Activated T-helper 2 cell treated with anti-CD3 and anti-CD28 coated beads, Interferon-gamma antibody, Interleukin-2, Interleukin-4, amounts not matched to agents 10 μg/mL and 5 μg/mL and 100 μg/mL, durations not matched to agents 14 hours and 24 hours and 36 hours (primary cell): ENCODE measurements at regions of chr9 and their contacts with region 1.

Region 1: GRCh38 chr9:89497978-89498851 is at the start of gene SEMA4D:
- DNase-seq: peak; percentile 55
- H3K4me3 Mint-ChIP-seq: peak within 1 kb of the TSS; percentile 87
- H3K27ac Mint-ChIP-seq: peak within 1 kb of the TSS; percentile 86
- H3K4me1 Mint-ChIP-seq: peaks cover 78% of the 10 kb centered on the region
- H3K27me3 Mint-ChIP-seq: no peaks in the 10 kb centered on the region
- total RNA-seq, gene SEMA4D: 317 and 330 TPM in 2 replicates

Region 2: DNA sequence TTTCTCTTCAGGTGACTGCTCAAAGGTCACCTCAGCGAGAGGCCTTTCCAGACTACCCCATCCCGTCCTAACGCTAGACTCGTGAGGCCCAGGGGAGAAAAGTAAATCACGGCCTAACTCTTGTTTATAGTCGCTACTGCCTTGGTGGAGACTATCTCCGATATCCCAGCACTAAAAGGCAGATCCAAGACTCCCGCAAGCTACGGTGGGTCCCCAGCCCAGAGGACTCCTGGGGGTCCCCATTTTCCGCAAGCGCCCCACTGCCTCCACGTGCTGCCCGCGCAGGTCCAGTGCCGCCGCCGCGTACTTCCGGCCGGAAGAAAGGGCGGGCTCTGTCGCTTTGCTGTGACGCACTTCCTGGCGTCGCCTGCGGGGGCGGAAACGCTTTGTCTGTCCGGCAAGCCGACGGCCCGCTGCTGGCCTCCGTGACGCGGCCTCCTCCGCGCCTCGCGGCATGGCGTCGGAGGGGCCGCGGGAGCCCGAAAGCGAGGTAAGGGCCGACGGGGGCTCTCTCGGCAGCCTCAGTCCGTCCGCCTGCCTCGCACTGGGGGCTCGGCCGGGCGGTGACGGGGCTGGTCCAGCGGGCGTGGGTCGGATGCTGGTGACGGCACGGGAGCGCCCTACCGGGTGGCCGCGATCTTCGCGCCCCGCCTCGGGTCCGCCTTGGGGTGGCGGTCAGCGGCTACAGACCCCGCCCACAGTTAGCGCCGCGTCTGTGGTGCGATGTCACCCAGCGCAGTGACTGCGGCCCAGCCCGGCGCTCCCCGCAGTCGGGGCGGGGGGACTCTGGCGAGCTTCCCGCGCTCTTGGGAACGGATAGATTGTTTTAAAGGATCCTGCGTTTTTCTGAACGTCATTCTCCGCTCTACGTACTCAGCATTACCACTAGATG is 179.8 kb before region 1 on chr9 and contains the start of gene SECISBP2:
- intact Hi-C with region 1: loop called (anchors 2 kb)
- DNase-seq: peak; percentile 94
- H3K4me3 Mint-ChIP-seq: peak within 1 kb of the TSS; percentile 88
- H3K27ac Mint-ChIP-seq: peak within 1 kb of the TSS; percentile 98
- H3K4me1 Mint-ChIP-seq: peaks cover 78% of the 10 kb centered on the region
- H3K27me3 Mint-ChIP-seq: no peaks in the 10 kb centered on the region
- total RNA-seq, gene SECISBP2: 51.3 and 53.5 TPM in 2 replicates

Region 3: DNA sequence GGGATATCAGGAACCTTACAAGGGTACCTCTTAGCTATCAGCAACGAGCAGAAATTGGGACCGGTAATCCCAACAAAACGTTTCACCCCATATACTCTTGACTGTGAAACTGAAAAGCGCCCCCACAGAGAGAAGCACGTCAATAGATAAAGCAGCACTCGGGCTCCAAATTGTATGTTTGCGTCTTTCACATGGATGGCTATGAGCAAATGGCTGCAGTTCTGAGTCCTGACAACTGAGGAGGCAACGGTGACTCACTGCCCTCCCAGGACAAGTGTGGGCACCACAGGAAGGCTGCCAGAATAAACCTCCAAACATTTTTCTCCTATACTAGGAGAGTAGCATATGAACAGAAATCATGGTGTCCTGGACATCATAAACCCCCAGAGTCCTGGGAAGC is 37.0 kb before region 1 on chr9:
- intact Hi-C with region 1: no loop called
- DNase-seq: no peak
- H3K4me3 Mint-ChIP-seq: peak overlapping the region; percentile 40
- H3K27ac Mint-ChIP-seq: peak overlapping the region; percentile 91
- H3K4me1 Mint-ChIP-seq: peaks cover 91% of the 10 kb centered on the region
- H3K27me3 Mint-ChIP-seq: no peaks in the 10 kb centered on the region

Region 4: GRCh38 chr9:89483592-89484522 is 14.4 kb before region 1 on chr9:
- intact Hi-C with region 1: loop called (anchors 1 kb)
- DNase-seq: peak; percentile 57
- H3K4me3 Mint-ChIP-seq: peak overlapping the region; percentile 80
- H3K27ac Mint-ChIP-seq: peak overlapping the region; percentile 93
- H3K4me1 Mint-ChIP-seq: peaks cover 77% of the 10 kb centered on the region
- H3K27me3 Mint-ChIP-seq: no peaks in the 10 kb centered on the region

Region 5: DNA sequence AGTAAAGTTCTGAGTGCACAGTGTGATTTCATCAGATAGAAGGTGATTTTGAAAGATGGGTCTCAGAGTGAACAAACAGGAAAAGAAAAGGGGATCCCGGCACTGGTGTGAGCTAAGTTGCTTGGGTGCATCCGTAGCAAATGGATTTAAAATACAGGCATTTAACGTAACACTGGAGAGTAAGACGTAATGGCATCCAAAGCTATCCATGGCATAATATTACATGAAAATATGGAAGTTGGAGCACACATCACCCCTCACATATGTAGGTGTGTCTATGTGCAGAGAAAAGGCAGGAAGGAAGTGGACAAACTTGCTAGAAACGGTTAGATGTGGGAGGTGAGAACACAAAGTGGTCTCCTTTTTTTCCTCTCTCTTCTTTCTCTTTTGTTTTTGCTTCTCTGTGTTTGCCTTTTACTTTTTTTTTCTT is 37.9 kb after region 1 on chr9:
- intact Hi-C with region 1: loop called (anchors 1 kb)
- DNase-seq: peak; percentile 33
- H3K4me3 Mint-ChIP-seq: peak overlapping the region; percentile 62
- H3K27ac Mint-ChIP-seq: peak overlapping the region; percentile 87
- H3K4me1 Mint-ChIP-seq: peaks cover 75% of the 10 kb centered on the region
- H3K27me3 Mint-ChIP-seq: no peaks in the 10 kb centered on the region